ENCODE measurements at regions of chr1 and their contacts with region 1.

Region 1: DNA sequence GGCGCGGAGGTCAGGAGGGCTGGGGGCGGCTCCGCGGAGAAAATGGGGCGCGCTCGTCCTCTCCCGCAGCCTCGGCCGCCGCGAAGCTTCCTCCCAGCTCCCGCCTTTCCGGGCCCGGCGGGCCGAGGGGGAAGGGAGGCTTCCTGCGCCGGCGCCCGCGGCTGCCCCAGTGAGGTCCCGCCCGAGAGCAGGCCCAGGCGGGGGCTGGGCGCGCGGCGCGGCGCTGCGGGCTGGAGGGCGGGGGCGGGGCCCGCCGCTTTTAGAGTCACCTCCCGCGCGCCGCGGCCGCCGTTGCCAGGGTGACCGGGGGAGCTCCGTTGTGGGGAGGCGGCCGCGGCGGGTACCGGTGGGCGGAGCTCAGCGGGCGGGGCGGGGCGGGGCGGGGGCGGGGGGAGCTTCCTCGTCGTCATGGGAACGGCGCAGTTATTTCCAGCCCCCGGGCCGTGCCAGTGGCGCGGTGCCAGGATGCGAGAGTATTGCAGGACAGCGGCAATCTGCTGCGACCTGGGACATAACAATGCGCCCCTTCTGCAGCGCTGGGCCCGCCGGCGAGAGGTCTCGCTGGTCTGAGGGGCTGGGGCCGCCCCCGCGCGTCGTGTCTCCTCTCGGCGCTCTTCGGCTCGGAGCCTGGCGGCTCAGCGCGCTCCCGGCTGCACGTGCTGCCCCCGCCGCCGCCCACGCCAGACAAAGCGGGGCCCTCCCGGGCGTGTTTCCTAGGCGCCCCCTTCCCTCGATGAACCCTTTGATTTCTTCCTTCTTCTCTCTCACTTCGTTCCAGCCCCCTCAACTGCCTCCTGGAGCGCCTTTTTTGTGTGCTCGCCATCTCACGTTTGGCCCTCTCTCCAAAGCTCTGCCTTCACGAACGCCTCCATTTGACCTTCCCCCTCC is 16.9 kb downstream of the IER5 start:
- DNase-seq: peak; percentile 81 to 94 (median 90)
- ATAC-seq: peak; percentile 94
- H3K4me3 ChIP-seq: peak overlapping the region; percentile 61
- H3K4me3 Mint-ChIP-seq: peak overlapping the region; percentile 84 to 96 (median 91)
- H3K27ac ChIP-seq: peak overlapping the region; percentile 85
- H3K27ac Mint-ChIP-seq: peak overlapping the region; percentile 69 to 97 (median 89)
- H3K4me1 ChIP-seq: peaks cover 16 to 20% of the 10 kb centered on the region in 2 donors
- H3K4me1 Mint-ChIP-seq: peaks cover 22 to 76% (median 61%) of the 10 kb centered on the region in 7 donors
- H3K27me3 ChIP-seq: no peaks in the 10 kb centered on the region
- H3K27me3 Mint-ChIP-seq: peaks cover 0 to 43% (median 0%) of the 10 kb centered on the region in 5 donors

Region 2: GRCh38 chr1:180154325-180155181 is 950.8 kb before region 1 on chr1 and contains the start of gene QSOX1:
- CTCF ChIA-PET with region 1: no interaction called
- POLR2A ChIA-PET with region 1: no interaction called
- intact Hi-C with region 1: loop called (anchors 5 kb)
- DNase-seq: peak; percentile 81 to 89 (median 86)
- ATAC-seq: peak; percentile 97
- H3K4me3 ChIP-seq: peak within 1 kb of the TSS; percentile 94
- H3K4me3 Mint-ChIP-seq: peak within 1 kb of the TSS; percentile 80 to 99 (median 91)
- H3K27ac ChIP-seq: peak within 1 kb of the TSS; percentile 78
- H3K27ac Mint-ChIP-seq: peak within 1 kb of the TSS; percentile 81 to 95 (median 86)
- H3K4me1 ChIP-seq: peaks cover 7 to 20% of the 10 kb centered on the region in 2 donors
- H3K4me1 Mint-ChIP-seq: peaks cover 24 to 45% (median 37%) of the 10 kb centered on the region in 7 donors
- H3K27me3 ChIP-seq: no peaks in the 10 kb centered on the region
- H3K27me3 Mint-ChIP-seq: no peaks in the 10 kb centered on the region
- total RNA-seq, gene QSOX1: 22.1 to 55.6 (median 25.6) TPM

Region 3: GRCh38 chr1:181033799-181034451 is 71.5 kb before region 1 on chr1 and contains the start of gene MR1:
- CTCF ChIA-PET with region 1: interaction called, 4 read pairs
- POLR2A ChIA-PET with region 1: interaction called, 7 read pairs
- intact Hi-C with region 1: loop called (anchors 1 kb)
- DNase-seq: peak in 8 of 9 donors; percentile 32 to 92 (median 88)
- ATAC-seq: peak; percentile 97
- H3K4me3 ChIP-seq: peak within 1 kb of the TSS; percentile 77
- H3K4me3 Mint-ChIP-seq: peak within 1 kb of the TSS; percentile 84 to 99 (median 97)
- H3K27ac ChIP-seq: peak within 1 kb of the TSS; percentile 95
- H3K27ac Mint-ChIP-seq: peak within 1 kb of the TSS; percentile 95 to 100 (median 98)
- H3K4me1 ChIP-seq: peaks cover 32 to 42% of the 10 kb centered on the region in 2 donors
- H3K4me1 Mint-ChIP-seq: peaks cover 39 to 69% (median 61%) of the 10 kb centered on the region in 7 donors
- H3K27me3 ChIP-seq: no peaks in the 10 kb centered on the region
- H3K27me3 Mint-ChIP-seq: peaks cover 0 to 6% (median 0%) of the 10 kb centered on the region in 5 donors
- total RNA-seq, gene MR1: 19.8 to 35.8 (median 29.7) TPM

Region 4: GRCh38 chr1:181152892-181153633 is 47.7 kb after region 1 on chr1:
- CTCF ChIA-PET with region 1: no interaction called
- POLR2A ChIA-PET with region 1: interaction called, 10 read pairs
- intact Hi-C with region 1: loop called in 1 of 2 experiments (anchors 1 kb)
- DNase-seq: no peak
- ATAC-seq: peak; percentile 58
- H3K4me3 ChIP-seq: no peak overlapping the region
- H3K4me3 Mint-ChIP-seq: no peak overlapping the region
- H3K27ac ChIP-seq: no peak overlapping the region
- H3K27ac Mint-ChIP-seq: peak overlapping the region in 1 of 9 donors; percentile 44
- H3K4me1 ChIP-seq: peaks cover 36 to 49% of the 10 kb centered on the region in 2 donors
- H3K4me1 Mint-ChIP-seq: peaks cover 37 to 75% (median 63%) of the 10 kb centered on the region in 7 donors
- H3K27me3 ChIP-seq: no peaks in the 10 kb centered on the region
- H3K27me3 Mint-ChIP-seq: peaks cover 0 to 27% (median 0%) of the 10 kb centered on the region in 5 donors

Region 5: DNA sequence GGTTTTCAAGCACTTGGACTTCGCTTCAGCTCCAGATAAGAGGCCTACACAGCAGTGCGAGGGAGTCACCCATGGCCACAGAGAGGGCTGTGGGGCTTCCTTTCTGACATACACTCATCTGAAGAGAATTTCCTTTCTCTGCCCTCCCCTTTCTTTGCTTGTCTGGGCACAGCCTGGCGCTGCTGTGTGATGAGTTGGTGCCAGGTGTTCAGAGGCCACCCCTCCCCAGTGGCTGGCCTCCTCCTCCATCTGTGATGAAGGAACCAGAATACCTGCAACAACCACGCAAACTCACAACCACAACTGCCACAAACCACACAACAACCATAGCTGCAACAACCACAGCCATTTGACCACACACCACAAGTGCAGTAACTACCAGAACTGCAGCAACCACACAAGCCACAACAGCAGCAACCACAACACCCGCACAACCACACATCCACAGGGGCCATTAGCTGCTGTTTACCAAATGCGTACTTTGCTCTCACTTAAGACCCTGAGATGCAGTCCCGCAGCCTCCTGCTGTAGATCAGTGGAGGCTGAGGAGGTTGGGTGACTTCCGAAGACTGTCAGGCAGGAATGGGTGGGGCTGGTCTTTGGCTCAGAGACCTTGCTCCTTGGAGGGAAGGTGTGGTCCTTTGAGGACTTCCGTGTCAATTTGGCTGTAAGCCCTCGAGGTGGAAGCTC is 54.2 kb after region 1 on chr1:
- CTCF ChIA-PET with region 1: interaction called, 3 read pairs
- POLR2A ChIA-PET with region 1: interaction called, 4 read pairs
- intact Hi-C with region 1: loop called in 1 of 2 experiments (anchors 2 kb)
- DNase-seq: peak; percentile 20 to 74 (median 68)
- ATAC-seq: peak; percentile 75
- H3K4me3 ChIP-seq: peak overlapping the region; percentile 28
- H3K4me3 Mint-ChIP-seq: peak overlapping the region; percentile 48 to 83 (median 72)
- H3K27ac ChIP-seq: no peak overlapping the region
- H3K27ac Mint-ChIP-seq: peak overlapping the region; percentile 80 to 98 (median 91)
- H3K4me1 ChIP-seq: peaks cover 25 to 37% of the 10 kb centered on the region in 2 donors
- H3K4me1 Mint-ChIP-seq: peaks cover 25 to 59% (median 45%) of the 10 kb centered on the region in 7 donors
- H3K27me3 ChIP-seq: no peaks in the 10 kb centered on the region
- H3K27me3 Mint-ChIP-seq: peaks cover 0 to 50% (median 0%) of the 10 kb centered on the region in 5 donors

Measured in naive thymus-derived CD4-positive, alpha-beta T cell (primary cell).